Natural killer cell (primary cell): ENCODE measurements at regions of chr6 and their contacts with region 1.

Region 1: GRCh38 chr6:35297601-35298481 is at the start of gene DEF6:
- DNase-seq: peak; percentile 85 to 95
- ATAC-seq: peak; percentile 85 to 92 (median 91)
- H3K4me3 ChIP-seq: peak within 1 kb of the TSS; percentile 95
- H3K4me3 Mint-ChIP-seq: peak within 1 kb of the TSS; percentile 89
- H3K27ac ChIP-seq: peak within 1 kb of the TSS; percentile 97
- H3K27ac Mint-ChIP-seq: peak within 1 kb of the TSS; percentile 97 to 98
- H3K4me1 ChIP-seq: peaks cover 54% of the 10 kb centered on the region
- H3K4me1 Mint-ChIP-seq: peaks cover 35 to 51% of the 10 kb centered on the region in 2 donors
- H3K27me3 ChIP-seq: no peaks in the 10 kb centered on the region
- H3K27me3 Mint-ChIP-seq: no peaks in the 10 kb centered on the region
- CTCF ChIP-seq: peak; percentile 87
- total RNA-seq, gene DEF6: 232 to 297 (median 241) TPM

Region 2: DNA sequence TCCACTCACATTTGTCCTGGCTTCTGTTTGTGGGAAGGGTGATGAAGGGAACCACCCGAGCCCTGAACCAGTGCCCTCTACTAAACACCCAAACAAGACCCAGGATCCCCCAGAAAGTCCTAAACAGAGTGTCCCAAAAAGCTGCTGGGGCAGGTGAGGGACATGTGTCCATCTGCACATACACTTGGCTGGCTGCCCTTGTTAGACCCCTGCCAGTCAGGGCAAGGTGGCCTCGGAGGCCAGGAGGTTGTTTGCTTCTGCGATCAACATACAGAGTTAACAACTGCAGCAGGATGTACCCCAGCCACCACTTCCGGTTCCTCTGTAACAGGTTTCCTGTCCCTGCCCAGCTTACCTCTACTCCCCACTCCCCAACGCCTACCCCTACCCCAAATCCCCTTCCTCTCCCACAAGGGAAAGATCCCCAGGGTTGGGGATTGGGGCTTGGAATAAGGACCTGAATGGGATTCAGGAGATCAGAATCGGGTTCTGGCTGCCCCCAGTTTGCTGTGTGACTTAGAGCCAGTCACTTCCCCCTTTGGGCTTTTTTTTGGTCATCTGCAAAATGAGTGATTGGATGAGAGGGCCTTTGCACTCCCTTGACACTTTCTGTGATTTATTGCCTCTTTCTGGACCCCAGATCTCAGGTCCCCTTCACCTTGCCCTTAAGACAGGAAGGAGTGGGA is 13.7 kb after region 1 on chr6:
- intact Hi-C with region 1: loop called (anchors 1 kb)
- DNase-seq: peak in 1 of 2 donors; percentile 83
- ATAC-seq: peak; percentile 71 to 82 (median 80)
- H3K4me3 ChIP-seq: peak overlapping the region; percentile 16
- H3K4me3 Mint-ChIP-seq: peak overlapping the region; percentile 76
- H3K27ac ChIP-seq: peak overlapping the region; percentile 88
- H3K27ac Mint-ChIP-seq: peak overlapping the region; percentile 92 to 96
- H3K4me1 ChIP-seq: peaks cover 42% of the 10 kb centered on the region
- H3K4me1 Mint-ChIP-seq: peaks cover 84 to 86% of the 10 kb centered on the region in 2 donors
- H3K27me3 ChIP-seq: no peaks in the 10 kb centered on the region
- H3K27me3 Mint-ChIP-seq: no peaks in the 10 kb centered on the region
- CTCF ChIP-seq: no peak

Region 3: DNA sequence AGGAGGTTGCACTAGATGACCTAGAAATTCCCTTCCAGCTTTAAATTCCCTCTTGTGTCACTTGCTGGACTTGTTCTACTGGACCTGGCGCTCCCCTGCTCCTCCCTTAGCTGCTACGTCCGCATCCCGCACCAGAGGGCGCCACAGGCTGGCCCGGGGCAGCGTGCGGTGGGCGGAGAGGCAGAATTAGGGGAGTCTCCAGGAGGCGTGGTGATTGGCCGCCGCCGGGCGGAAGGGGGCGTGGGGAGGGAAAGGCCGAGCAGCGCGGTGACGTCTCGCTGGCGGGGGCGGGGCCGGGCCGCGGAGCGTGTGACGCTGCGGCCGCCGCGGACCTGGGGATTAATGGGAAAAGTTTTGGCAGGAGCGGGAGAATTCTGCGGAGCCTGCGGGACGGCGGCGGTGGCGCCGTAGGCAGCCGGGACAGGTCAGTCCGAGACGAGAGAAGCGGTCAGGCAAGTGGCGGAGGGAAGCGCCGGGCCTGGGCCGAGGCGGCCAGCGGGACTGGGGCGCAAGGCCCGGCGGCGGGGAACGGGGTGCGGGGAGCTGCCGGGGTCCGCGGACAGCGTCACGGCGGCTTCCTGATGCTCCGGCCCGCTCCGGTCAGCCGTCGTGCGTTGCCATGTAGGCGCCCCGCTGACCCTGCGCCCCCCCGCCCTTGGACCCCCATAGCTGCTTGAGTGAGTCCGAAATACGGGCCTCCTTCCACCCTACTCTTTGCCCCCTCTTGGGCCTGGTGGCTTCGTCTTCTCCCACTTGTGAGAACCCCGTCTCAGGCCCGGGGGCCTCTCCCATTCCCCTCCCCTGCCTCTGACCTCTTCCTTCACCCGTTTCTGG is 44.6 kb after region 1 on chr6 and contains the start of gene PPARD:
- intact Hi-C with region 1: loop called (anchors 5 kb)
- DNase-seq: peak; percentile 98
- ATAC-seq: peak; percentile 99 to 100 (median 99)
- H3K4me3 ChIP-seq: peak within 1 kb of the TSS; percentile 61
- H3K4me3 Mint-ChIP-seq: peak within 1 kb of the TSS; percentile 95
- H3K27ac ChIP-seq: peak within 1 kb of the TSS; percentile 68
- H3K27ac Mint-ChIP-seq: peak within 1 kb of the TSS; percentile 85 to 94
- H3K4me1 ChIP-seq: peaks cover 13% of the 10 kb centered on the region
- H3K4me1 Mint-ChIP-seq: peaks cover 35 to 40% of the 10 kb centered on the region in 2 donors
- H3K27me3 ChIP-seq: no peaks in the 10 kb centered on the region
- H3K27me3 Mint-ChIP-seq: no peaks in the 10 kb centered on the region
- CTCF ChIP-seq: peak; percentile 90
- total RNA-seq, gene PPARD: 14.4 to 20.4 (median 18.8) TPM

Region 4: DNA sequence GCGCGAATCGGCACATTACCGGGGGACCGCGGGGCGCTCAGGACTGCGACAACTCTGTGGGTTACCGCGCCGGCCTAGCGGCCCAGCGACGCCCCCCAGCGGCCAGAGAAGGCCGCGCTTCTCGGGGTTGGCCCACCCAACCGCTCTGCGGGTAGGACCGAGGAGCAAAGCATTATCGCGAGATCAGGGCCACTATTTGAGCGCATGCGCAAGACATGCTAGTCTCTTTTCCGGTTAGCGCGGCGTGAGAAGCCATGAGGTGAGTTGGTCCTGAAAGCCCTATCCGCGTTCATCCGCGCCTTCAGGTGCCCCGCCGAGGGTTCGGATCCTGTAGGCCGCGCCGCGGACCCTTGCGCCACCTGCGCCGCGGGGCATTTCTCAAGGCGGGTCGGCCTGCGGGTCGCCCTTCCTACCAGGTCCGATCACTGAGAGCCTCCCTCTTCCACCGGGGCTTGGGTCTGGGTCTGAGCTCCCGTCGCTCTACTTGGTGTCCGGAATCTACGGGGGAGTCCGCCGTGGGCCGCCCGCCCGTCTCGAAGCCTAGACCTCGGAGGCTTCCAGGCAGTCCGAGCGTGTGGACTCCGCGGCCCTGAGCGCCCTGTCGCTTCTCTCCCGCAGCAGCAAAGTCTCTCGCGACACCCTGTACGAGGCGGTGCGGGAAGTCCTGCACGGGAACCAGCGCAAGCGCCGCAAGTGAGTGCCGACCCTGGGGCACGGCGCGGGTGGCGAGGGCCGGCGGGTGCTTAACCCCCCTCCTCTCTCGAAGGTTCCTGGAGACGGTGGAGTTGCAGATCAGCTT is 170.5 kb after region 1 on chr6 and contains the start of gene RPL10A:
- intact Hi-C with region 1: loop called (anchors 1 kb)
- DNase-seq: peak; percentile 91 to 99
- ATAC-seq: peak; percentile 87 to 97 (median 89)
- H3K4me3 ChIP-seq: peak within 1 kb of the TSS; percentile 67
- H3K4me3 Mint-ChIP-seq: peak within 1 kb of the TSS; percentile 97
- H3K27ac ChIP-seq: peak within 1 kb of the TSS; percentile 79
- H3K27ac Mint-ChIP-seq: peak within 1 kb of the TSS; percentile 92 to 98
- H3K4me1 ChIP-seq: peaks cover 31% of the 10 kb centered on the region
- H3K4me1 Mint-ChIP-seq: peaks cover 38% of the 10 kb centered on the region in 2 donors
- H3K27me3 ChIP-seq: no peaks in the 10 kb centered on the region
- H3K27me3 Mint-ChIP-seq: no peaks in the 10 kb centered on the region
- CTCF ChIP-seq: peak; percentile 87
- total RNA-seq, gene RPL10A: 723 to 943 (median 942) TPM

Region 5: GRCh38 chr6:35736253-35736894 is 438.5 kb after region 1 on chr6:
- intact Hi-C with region 1: loop called (anchors 5 kb)
- DNase-seq: peak; percentile 79 to 92
- ATAC-seq: peak; percentile 39 to 60 (median 48)
- H3K4me3 ChIP-seq: no peak overlapping the region
- H3K4me3 Mint-ChIP-seq: no peak overlapping the region
- H3K27ac ChIP-seq: no peak overlapping the region
- H3K27ac Mint-ChIP-seq: no peak overlapping the region
- H3K4me1 ChIP-seq: peaks cover 37% of the 10 kb centered on the region
- H3K4me1 Mint-ChIP-seq: peaks cover 26 to 35% of the 10 kb centered on the region in 2 donors
- H3K27me3 ChIP-seq: no peaks in the 10 kb centered on the region
- H3K27me3 Mint-ChIP-seq: no peaks in the 10 kb centered on the region
- CTCF ChIP-seq: peak; percentile 87

Region 6: GRCh38 chr6:35804996-35805736 is 507.3 kb after region 1 on chr6 and contains the start of gene LHFPL5:
- intact Hi-C with region 1: no loop called
- DNase-seq: peak; percentile 58 to 64
- ATAC-seq: peak; percentile 80 to 98 (median 96)
- H3K4me3 ChIP-seq: no peak within 1 kb of the TSS
- H3K4me3 Mint-ChIP-seq: no peak within 1 kb of the TSS
- H3K27ac ChIP-seq: no peak within 1 kb of the TSS
- H3K27ac Mint-ChIP-seq: no peak within 1 kb of the TSS
- H3K4me1 ChIP-seq: peaks cover 7% of the 10 kb centered on the region
- H3K4me1 Mint-ChIP-seq: peaks cover 5 to 12% of the 10 kb centered on the region in 2 donors
- H3K27me3 ChIP-seq: peaks cover 10% of the 10 kb centered on the region
- H3K27me3 Mint-ChIP-seq: peaks cover 15 to 26% of the 10 kb centered on the region in 2 donors
- CTCF ChIP-seq: no peak
- total RNA-seq, gene LHFPL5: not detected

Region 7: GRCh38 chr6:37277001-37277409 is 1979.2 kb after region 1 on chr6:
- intact Hi-C with region 1: no loop called
- DNase-seq: peak in 1 of 2 donors; percentile 14
- ATAC-seq: peak in 1 of 3 donors; percentile 48
- H3K4me3 ChIP-seq: no peak overlapping the region
- H3K4me3 Mint-ChIP-seq: no peak overlapping the region
- H3K27ac ChIP-seq: no peak overlapping the region
- H3K27ac Mint-ChIP-seq: no peak overlapping the region
- H3K4me1 ChIP-seq: peaks cover 3% of the 10 kb centered on the region
- H3K4me1 Mint-ChIP-seq: peaks cover 42 to 45% of the 10 kb centered on the region in 2 donors
- H3K27me3 ChIP-seq: no peaks in the 10 kb centered on the region
- H3K27me3 Mint-ChIP-seq: no peaks in the 10 kb centered on the region
- CTCF ChIP-seq: no peak